Transverse colon (tissue), 4 donors: ENCODE measurements at regions of chr15 and their contacts with region 1.

Region 1: GRCh38 chr15:60585743-60586708 is 107.1 kb upstream of the ICE2 start:
- DNase-seq: peak; percentile 64
- H3K4me3 ChIP-seq: no peak overlapping the region
- H3K27ac ChIP-seq: peak overlapping the region in 3 of 4 donors; percentile 5 to 10 (median 6)
- H3K4me1 ChIP-seq: peaks cover 0 to 20% (median 11%) of the 10 kb centered on the region in 4 donors
- H3K27me3 ChIP-seq: peaks cover 14% of the 10 kb centered on the region
- CTCF ChIP-seq: peak; percentile 85 to 93 (median 91)
- EP300 ChIP-seq: no peak
- POLR2A ChIP-seq: no peak

Region 2: DNA sequence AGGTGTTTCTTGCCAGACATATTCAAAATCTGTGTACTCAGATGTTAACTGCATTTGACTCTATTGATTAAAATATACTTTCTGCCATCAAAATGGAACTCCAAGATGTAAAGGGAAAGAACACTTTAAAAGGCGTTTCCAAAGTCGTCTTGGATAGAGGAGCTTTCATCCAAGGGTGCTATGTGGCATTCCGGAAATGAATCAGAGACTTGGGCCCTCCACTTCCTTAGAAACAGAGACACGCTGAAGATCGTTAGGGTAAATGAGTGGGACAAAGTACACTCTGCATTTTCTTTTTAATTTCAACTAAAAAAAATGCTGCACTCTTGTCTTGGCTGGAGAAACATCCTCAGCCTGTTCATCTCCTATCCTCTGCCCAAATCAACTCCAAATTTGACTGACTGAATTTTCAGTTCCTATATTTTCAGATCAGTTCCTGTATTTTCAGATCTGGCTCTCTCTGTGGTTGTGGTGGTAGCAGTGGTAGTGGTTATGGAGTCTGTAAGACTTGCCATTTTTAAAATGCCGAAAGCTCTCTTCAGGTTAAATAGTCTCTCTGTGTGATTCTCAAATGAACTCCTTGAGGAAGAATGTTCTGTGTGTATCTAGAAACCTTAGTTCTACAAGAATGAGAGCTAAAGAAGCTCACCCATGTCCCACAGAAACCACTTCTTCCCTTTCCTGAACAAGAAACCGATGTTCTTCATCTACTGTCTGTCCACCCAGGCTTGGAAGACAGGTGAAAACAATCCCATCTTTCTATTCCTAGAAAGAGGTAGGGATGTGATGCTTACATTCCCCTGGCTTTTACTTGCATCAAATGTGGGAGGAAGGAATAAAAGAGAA is 49.7 kb after region 1 on chr15:
- in situ Hi-C with region 1: no loop called
- intact Hi-C with region 1: no loop called
- DNase-seq: no peak
- H3K4me3 ChIP-seq: no peak overlapping the region
- H3K27ac ChIP-seq: no peak overlapping the region
- H3K4me1 ChIP-seq: no peaks in the 10 kb centered on the region
- H3K27me3 ChIP-seq: no peaks in the 10 kb centered on the region
- CTCF ChIP-seq: no peak
- EP300 ChIP-seq: no peak
- POLR2A ChIP-seq: no peak

Region 3: GRCh38 chr15:60916679-60917460 is 330.8 kb after region 1 on chr15:
- in situ Hi-C with region 1: loop called (anchors 5 to 10 kb)
- intact Hi-C with region 1: loop called (anchors 5 kb)
- DNase-seq: peak; percentile 86
- H3K4me3 ChIP-seq: no peak overlapping the region
- H3K27ac ChIP-seq: peak overlapping the region; percentile 57 to 78 (median 64)
- H3K4me1 ChIP-seq: peaks cover 10 to 35% (median 18%) of the 10 kb centered on the region in 4 donors
- H3K27me3 ChIP-seq: no peaks in the 10 kb centered on the region
- CTCF ChIP-seq: peak; percentile 74 to 85 (median 83)
- EP300 ChIP-seq: no peak
- POLR2A ChIP-seq: no peak

Region 4: DNA sequence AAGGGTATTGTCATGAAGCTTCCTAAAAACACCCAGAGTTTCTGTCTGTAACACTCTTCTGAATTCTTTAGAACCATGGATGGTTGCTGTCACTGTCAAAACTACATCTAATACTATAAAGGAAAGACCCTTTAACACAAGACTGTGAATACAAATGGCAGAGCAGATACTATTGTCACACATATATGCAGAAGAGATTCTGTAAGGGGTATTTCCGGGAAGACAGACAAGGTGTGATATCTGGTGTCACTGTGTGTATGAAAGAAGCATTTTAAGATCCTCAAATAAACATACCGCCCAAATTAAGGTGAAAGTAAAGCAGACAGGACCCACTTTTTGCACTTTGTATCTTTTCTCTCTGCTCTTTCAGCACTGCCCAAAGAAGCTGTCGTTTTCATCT is 336.7 kb after region 1 on chr15:
- in situ Hi-C with region 1: loop called in 3 of 4 experiments (anchors 5 to 10 kb)
- intact Hi-C with region 1: loop called (anchors 5 kb)
- DNase-seq: no peak
- H3K4me3 ChIP-seq: no peak overlapping the region
- H3K27ac ChIP-seq: no peak overlapping the region
- H3K4me1 ChIP-seq: peaks cover 0 to 13% (median 6%) of the 10 kb centered on the region in 4 donors
- H3K27me3 ChIP-seq: no peaks in the 10 kb centered on the region
- CTCF ChIP-seq: no peak
- EP300 ChIP-seq: no peak
- POLR2A ChIP-seq: no peak

Region 5: DNA sequence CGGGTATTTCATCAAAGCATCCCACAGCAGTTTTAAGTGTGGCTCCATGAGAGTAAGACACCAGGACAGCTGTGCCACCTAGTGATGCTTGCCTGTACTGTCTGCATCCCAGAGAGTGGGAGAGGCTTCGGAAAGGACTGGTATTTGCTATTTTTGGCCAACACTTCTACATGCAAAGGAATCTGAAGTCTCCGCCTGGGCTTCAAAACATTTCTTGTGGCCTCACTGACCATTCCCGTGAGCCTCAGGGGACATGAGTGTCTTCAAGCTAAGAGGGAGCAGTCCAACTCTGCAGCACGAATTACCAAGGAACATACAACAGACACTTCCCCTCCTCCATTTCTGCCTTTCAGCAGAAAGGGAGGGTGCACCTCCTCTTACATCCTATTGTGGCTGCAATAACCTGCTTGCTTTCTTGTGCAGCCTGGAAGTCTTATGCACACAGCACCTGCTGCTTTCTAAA is 465.6 kb after region 1 on chr15:
- in situ Hi-C with region 1: loop called in 3 of 4 experiments (anchors 10 to 25 kb)
- intact Hi-C with region 1: loop called (anchors 2 kb)
- DNase-seq: peak; percentile 32
- H3K4me3 ChIP-seq: no peak overlapping the region
- H3K27ac ChIP-seq: peak overlapping the region in 3 of 4 donors; percentile 10 to 25 (median 15)
- H3K4me1 ChIP-seq: no peaks in the 10 kb centered on the region
- H3K27me3 ChIP-seq: no peaks in the 10 kb centered on the region
- CTCF ChIP-seq: peak; percentile 46 to 56 (median 51)
- EP300 ChIP-seq: no peak
- POLR2A ChIP-seq: no peak

Region 6: GRCh38 chr15:61834076-61834697 is 1248.2 kb after region 1 on chr15:
- in situ Hi-C with region 1: loop called in 2 of 4 experiments (anchors 25 kb)
- intact Hi-C with region 1: loop called (anchors 10 kb)
- DNase-seq: peak; percentile 82
- H3K4me3 ChIP-seq: no peak overlapping the region
- H3K27ac ChIP-seq: no peak overlapping the region
- H3K4me1 ChIP-seq: no peaks in the 10 kb centered on the region
- H3K27me3 ChIP-seq: no peaks in the 10 kb centered on the region
- CTCF ChIP-seq: peak; percentile 87 to 98 (median 96)
- EP300 ChIP-seq: no peak
- POLR2A ChIP-seq: no peak